Heart right ventricle (tissue), 16 donors: ENCODE measurements at regions of chr14 and their contacts with region 1.

Region 1: GRCh38 chr14:31106768-31107167 is 80.6 kb upstream of the STRN3 start:
- DNase-seq: no peak
- ATAC-seq: no peak
- H3K4me3 ChIP-seq: no peak overlapping the region
- H3K27ac ChIP-seq: no peak overlapping the region
- H3K4me1 ChIP-seq: no peaks in the 10 kb centered on the region
- H3K27me3 ChIP-seq: no peaks in the 10 kb centered on the region
- CTCF ChIP-seq: no peak

Region 2: GRCh38 chr14:30751641-30752416 is 354.9 kb before region 1 on chr14:
- intact Hi-C with region 1: no loop called
- DNase-seq: no peak
- ATAC-seq: no peak
- H3K4me3 ChIP-seq: no peak overlapping the region
- H3K27ac ChIP-seq: no peak overlapping the region
- H3K4me1 ChIP-seq: no peaks in the 10 kb centered on the region
- H3K27me3 ChIP-seq: no peaks in the 10 kb centered on the region
- CTCF ChIP-seq: no peak

Region 3: GRCh38 chr14:31038521-31039166 is 68.1 kb before region 1 on chr14:
- intact Hi-C with region 1: no loop called
- DNase-seq: no peak
- ATAC-seq: peak in 6 of 8 donors; percentile 33 to 89 (median 66)
- H3K4me3 ChIP-seq: no peak overlapping the region
- H3K27ac ChIP-seq: no peak overlapping the region
- H3K4me1 ChIP-seq: peaks cover 0 to 4% (median 0%) of the 10 kb centered on the region in 9 donors
- H3K27me3 ChIP-seq: no peaks in the 10 kb centered on the region
- CTCF ChIP-seq: no peak

Region 4: GRCh38 chr14:31142455-31143087 is 35.8 kb after region 1 on chr14:
- intact Hi-C with region 1: loop called in 3 of 10 experiments (anchors 5 kb)
- DNase-seq: no peak
- ATAC-seq: no peak
- H3K4me3 ChIP-seq: no peak overlapping the region
- H3K27ac ChIP-seq: no peak overlapping the region
- H3K4me1 ChIP-seq: no peaks in the 10 kb centered on the region
- H3K27me3 ChIP-seq: no peaks in the 10 kb centered on the region
- CTCF ChIP-seq: no peak